Posterior vena cava (tissue), 2 donors: ENCODE measurements at regions of chr14 and their contacts with region 1.

Region 1: DNA sequence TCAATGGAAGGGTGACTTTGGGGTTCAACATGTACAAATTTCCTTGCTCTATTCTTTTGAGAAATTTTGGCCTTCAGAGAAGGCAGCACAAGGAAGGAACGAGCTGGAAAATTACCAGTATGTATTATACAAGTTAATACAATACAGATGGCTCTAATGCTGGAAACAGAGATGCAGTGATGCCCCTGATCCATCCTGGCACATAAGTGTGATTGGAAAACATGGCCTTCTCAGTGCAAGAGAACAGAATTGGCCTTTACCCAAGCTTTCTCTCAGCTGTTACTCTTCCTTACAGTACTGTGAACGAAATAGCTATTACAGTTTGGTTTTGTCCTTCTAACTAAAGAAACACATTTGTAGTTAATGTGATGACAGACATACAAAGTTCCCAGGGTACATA is 102.5 kb upstream of the GPHB5 start:
- DNase-seq: no peak

Region 2: DNA sequence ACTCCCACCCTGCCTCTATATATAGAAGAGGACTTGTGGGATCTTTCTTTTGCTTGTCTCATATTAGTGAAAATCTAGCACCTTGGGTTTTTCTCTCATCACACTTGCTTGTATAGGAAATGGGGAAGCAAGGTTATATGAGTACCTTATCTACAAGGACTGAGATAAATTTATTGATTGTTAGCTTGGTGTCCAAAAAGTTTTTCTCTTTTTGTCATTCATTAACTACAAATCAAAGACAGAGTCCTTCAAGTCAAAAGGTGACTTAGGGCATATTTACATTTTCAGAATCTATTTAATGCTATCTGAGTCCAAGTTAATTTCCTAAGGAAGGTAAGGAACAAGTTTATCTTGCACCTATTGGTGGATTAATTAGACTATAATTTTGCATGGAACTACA is 1566.3 kb before region 1 on chr14:
- intact Hi-C with region 1: loop called in 1 of 2 experiments (anchors 5 kb)
- DNase-seq: no peak

Region 3: GRCh38 chr14:63493246-63493645 is 72.0 kb after region 1 on chr14:
- intact Hi-C with region 1: no loop called
- DNase-seq: no peak